Panc1 (cell line): ENCODE measurements at regions of chr20 and their contacts with region 1.

Region 1: DNA sequence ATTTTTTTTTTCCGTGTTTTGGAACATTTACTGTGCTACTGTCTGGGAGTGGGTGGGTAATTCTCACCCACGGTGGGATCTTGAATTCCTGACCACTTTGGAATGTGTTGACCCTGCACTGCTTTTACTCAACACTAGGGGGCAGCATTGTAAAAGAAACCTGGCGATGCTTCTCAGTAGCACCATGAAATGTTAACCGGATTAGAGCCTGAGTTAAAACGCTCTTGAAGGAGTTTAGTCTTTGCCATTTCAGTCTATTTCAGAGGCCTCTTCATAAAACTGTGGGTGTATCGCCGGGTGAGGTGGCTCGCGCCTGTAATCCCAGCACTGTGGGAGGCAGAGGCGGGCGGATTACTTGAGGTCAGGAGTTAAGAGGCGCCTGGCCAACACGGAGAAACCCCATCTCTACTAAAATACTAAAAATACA is 114.4 kb upstream of the PRND start:
- DNase-seq: peak; percentile 55
- ATAC-seq: peak; percentile 86
- H3K4me3 ChIP-seq: no peak overlapping the region
- H3K27ac ChIP-seq: no peak overlapping the region
- H3K4me1 ChIP-seq: no peaks in the 10 kb centered on the region
- H3K27me3 ChIP-seq: peaks cover 10% of the 10 kb centered on the region; the same call in 1 of the 2 replicates
- CTCF ChIP-seq: peak; percentile 92

Region 2: DNA sequence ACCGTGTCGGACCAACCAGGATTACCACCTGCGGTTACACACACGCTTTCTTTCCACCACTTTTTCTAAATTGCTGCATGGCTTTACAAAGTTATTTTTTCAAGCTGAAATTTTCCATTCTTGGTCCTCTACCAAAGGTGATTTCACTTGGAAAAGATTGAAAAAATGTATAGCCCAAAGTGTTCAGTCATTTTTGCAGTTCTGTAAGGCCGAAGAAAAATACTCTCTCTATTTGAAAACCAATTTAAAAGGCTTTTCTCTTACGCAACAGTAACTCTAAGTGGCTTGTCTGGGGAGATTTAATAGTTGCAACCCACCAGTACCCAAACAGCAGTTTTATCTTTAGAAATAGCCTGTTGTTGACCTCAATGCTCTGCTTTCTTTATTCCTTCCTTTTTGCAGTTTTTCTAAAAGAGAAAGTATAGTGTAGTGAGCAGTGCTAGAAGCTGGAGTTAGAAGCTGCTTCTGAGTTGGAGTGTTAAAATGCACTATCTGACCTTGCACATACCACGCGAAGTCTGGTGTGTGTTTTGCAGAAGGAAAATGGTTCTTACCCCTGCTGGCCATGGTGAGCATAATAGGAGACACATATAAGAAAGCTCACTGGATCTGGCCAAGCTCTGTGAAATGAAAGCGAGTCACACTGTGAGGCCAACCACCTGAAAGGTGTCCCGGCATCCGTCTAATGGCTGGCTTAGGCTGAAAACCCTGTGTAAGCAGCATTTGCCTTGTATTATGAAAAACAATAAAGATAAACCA is 157.2 kb before region 1 on chr20:
- CTCF ChIA-PET with region 1: no interaction called
- POLR2A ChIA-PET with region 1: no interaction called
- in situ Hi-C with region 1: no loop called
- intact Hi-C with region 1: no loop called
- DNase-seq: no peak
- ATAC-seq: peak; percentile 77; the same call in 1 of the 2 replicates
- H3K4me3 ChIP-seq: no peak overlapping the region
- H3K27ac ChIP-seq: no peak overlapping the region
- H3K4me1 ChIP-seq: no peaks in the 10 kb centered on the region
- H3K27me3 ChIP-seq: peaks cover 4% of the 10 kb centered on the region; the same call in 1 of the 2 replicates
- CTCF ChIP-seq: peak; percentile 36

Region 3: GRCh38 chr20:4720041-4720976 is 113.0 kb after region 1 on chr20:
- CTCF ChIA-PET with region 1: interaction called, 3 read pairs
- POLR2A ChIA-PET with region 1: no interaction called
- in situ Hi-C with region 1: no loop called
- intact Hi-C with region 1: loop called (anchors 1 kb)
- DNase-seq: peak; percentile 39
- ATAC-seq: peak; percentile 83
- H3K4me3 ChIP-seq: no peak overlapping the region
- H3K27ac ChIP-seq: no peak overlapping the region
- H3K4me1 ChIP-seq: no peaks in the 10 kb centered on the region; the same call in 1 of the 2 replicates
- H3K27me3 ChIP-seq: peaks cover 2% of the 10 kb centered on the region; the same call in 1 of the 2 replicates
- CTCF ChIP-seq: peak; percentile 83

Region 4: GRCh38 chr20:4956200-4956810 is 349.0 kb after region 1 on chr20:
- CTCF ChIA-PET with region 1: no interaction called
- POLR2A ChIA-PET with region 1: no interaction called
- in situ Hi-C with region 1: no loop called
- intact Hi-C with region 1: loop called (anchors 10 kb)
- DNase-seq: peak; percentile 45
- ATAC-seq: no peak
- H3K4me3 ChIP-seq: no peak overlapping the region
- H3K27ac ChIP-seq: no peak overlapping the region
- H3K4me1 ChIP-seq: no peaks in the 10 kb centered on the region
- H3K27me3 ChIP-seq: no peaks in the 10 kb centered on the region
- CTCF ChIP-seq: peak; percentile 81

Region 5: DNA sequence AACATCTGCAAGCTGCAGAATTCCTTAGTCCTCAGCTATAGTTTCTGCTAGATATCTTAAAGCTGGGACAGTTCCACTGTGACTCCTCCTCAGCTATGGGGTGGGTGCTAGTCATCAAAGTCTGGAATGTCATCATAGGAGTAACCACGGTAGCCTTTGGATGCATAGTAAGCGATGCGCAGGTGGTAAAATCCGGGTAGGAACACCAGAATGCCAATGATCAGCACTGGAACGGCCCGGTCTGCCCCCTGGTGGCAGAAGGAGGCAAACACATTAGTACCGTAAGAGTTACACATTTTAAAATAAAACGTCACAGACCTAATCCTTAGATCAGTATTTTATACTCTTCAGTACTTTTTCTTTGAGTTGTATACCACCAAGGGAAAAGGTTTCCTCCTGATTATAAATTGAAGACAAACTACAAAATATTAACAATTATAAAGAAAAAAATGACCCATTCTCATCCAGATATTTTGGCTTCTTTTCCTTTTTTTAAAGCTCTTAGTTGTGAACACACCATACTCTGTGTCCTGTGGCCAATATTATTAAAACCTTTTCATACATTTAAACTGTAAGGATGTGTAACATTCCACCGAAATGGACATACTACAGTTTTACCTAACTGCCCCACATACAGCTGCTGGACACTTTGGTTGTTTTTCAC is 493.5 kb after region 1 on chr20:
- CTCF ChIA-PET with region 1: no interaction called
- POLR2A ChIA-PET with region 1: no interaction called
- in situ Hi-C with region 1: no loop called
- intact Hi-C with region 1: loop called (anchors 5 kb)
- DNase-seq: peak; percentile 42
- ATAC-seq: peak; percentile 83
- H3K4me3 ChIP-seq: no peak overlapping the region
- H3K27ac ChIP-seq: no peak overlapping the region
- H3K4me1 ChIP-seq: no peaks in the 10 kb centered on the region
- H3K27me3 ChIP-seq: no peaks in the 10 kb centered on the region
- CTCF ChIP-seq: peak; percentile 94